GM12878 (cell line): ENCODE measurements at regions of chr1 and their contacts with region 1.

Region 1: DNA sequence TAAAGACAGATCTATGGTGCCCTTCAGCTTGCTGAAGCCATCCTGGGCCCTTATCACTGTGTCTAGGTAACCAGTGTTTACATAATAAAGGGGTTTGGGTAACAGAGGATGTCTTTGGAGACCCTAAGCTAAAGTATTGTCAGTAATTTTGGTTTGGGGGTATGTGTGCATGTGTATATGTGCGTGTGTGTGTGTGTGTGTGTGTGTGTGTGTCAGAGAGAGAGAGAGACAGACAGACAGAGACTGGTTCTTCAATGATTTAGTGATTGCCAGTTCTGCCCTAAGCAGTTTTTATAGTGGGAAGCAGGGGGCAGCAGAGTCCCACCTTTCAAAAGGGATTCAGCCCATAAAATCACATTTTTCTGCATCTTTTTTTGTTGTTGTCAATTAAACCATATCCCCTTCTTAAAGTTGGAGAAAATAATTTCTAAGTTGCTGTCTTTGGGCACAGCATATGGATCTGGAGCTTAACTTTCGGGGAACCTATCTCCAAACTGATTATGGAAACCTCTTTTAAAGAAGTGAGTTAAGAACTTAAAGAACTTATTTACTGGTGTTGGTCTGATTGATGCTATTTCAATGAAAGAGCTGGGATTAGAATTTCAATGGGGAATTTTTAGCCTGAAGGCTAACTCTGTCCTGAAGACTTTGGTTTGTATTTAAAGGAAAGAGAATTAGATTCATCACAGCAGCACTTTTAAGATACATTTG is 51.1 kb downstream of the ZNF326 start:
- DNase-seq: no peak
- ATAC-seq: peak; percentile 85
- H3K4me3 ChIP-seq: no peak overlapping the region
- H3K27ac ChIP-seq: no peak overlapping the region
- H3K4me1 ChIP-seq: no peaks in the 10 kb centered on the region
- H3K27me3 ChIP-seq: no peaks in the 10 kb centered on the region
- CTCF ChIP-seq: peak; percentile 58 to 68 (median 64)
- EP300 ChIP-seq: no peak
- POLR2A ChIP-seq: no peak
- RAD21 ChIP-seq: peak; percentile 60

Region 2: DNA sequence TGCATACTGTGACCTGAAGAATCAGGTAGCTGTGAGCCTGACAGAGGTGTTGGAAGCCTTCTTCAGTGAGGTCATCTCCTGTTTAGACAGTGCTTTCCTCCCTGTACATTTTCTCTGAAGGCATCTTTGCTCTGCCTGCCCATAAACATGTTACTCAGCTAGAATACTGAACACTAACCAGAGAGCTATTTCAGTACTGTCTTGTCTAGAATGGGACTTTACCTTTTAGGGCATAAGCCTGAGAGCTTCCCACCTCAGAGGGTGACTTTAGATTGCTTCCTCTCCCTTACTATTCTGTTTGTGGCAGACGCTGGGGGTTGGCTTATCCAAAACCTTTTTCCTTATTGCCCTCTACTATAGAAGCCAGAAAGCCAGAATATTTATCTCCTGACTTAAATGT is 74.4 kb before region 1 on chr1:
- CTCF ChIA-PET with region 1: no interaction called
- POLR2A ChIA-PET with region 1: no interaction called
- RAD21 ChIA-PET with region 1: no interaction called
- SMC1A ChIA-PET with region 1: no interaction called
- in situ Hi-C with region 1: no loop called
- intact Hi-C with region 1: no loop called
- DNase-seq: no peak
- ATAC-seq: peak; percentile 71
- H3K4me3 ChIP-seq: no peak overlapping the region
- H3K27ac ChIP-seq: no peak overlapping the region
- H3K4me1 ChIP-seq: peaks cover 9% of the 10 kb centered on the region; the same call in 1 of the 2 replicates
- H3K27me3 ChIP-seq: no peaks in the 10 kb centered on the region
- CTCF ChIP-seq: no peak
- EP300 ChIP-seq: no peak
- POLR2A ChIP-seq: no peak
- RAD21 ChIP-seq: no peak

Region 3: GRCh38 chr1:89994805-89995597 is 51.0 kb before region 1 on chr1 and contains the start of gene ZNF326:
- CTCF ChIA-PET with region 1: no interaction called
- POLR2A ChIA-PET with region 1: no interaction called
- RAD21 ChIA-PET with region 1: no interaction called
- SMC1A ChIA-PET with region 1: no interaction called
- in situ Hi-C with region 1: no loop called
- intact Hi-C with region 1: no loop called
- DNase-seq: peak; percentile 70
- ATAC-seq: peak; percentile 97
- H3K4me3 ChIP-seq: peak within 1 kb of the TSS; percentile 71
- H3K27ac ChIP-seq: peak within 1 kb of the TSS; percentile 89
- H3K4me1 ChIP-seq: no peaks in the 10 kb centered on the region
- H3K27me3 ChIP-seq: no peaks in the 10 kb centered on the region
- CTCF ChIP-seq: 0 out of 6 replicates have a peak, but pooled peaks of 1 of the 3 experiments have one; percentile 5
- EP300 ChIP-seq: no peak
- POLR2A ChIP-seq: peak; percentile 100
- RAD21 ChIP-seq: no peak
- polyA plus RNA-seq, gene ZNF326: 7.1 to 11.1 TPM

Region 4: GRCh38 chr1:90104941-90105538 is 59.0 kb after region 1 on chr1:
- CTCF ChIA-PET with region 1: no interaction called
- POLR2A ChIA-PET with region 1: no interaction called
- RAD21 ChIA-PET with region 1: interaction called, 3 read pairs
- SMC1A ChIA-PET with region 1: no interaction called
- in situ Hi-C with region 1: no loop called
- intact Hi-C with region 1: loop called (anchors 5 kb)
- DNase-seq: no peak
- ATAC-seq: no peak
- H3K4me3 ChIP-seq: no peak overlapping the region
- H3K27ac ChIP-seq: no peak overlapping the region
- H3K4me1 ChIP-seq: no peaks in the 10 kb centered on the region
- H3K27me3 ChIP-seq: no peaks in the 10 kb centered on the region; a peak in 1 of 4 replicates
- CTCF ChIP-seq: no peak
- EP300 ChIP-seq: no peak
- POLR2A ChIP-seq: no peak
- RAD21 ChIP-seq: no peak